Activated naive CD4-positive, alpha-beta T cell treated with anti-CD3 and anti-CD28 coated beads, Interleukin-2, amount 10 ng/mL, durations not matched to agents 7 days and 5 days (primary cell): ENCODE measurements at regions of chr1 and their contacts with region 1.

Region 1: DNA sequence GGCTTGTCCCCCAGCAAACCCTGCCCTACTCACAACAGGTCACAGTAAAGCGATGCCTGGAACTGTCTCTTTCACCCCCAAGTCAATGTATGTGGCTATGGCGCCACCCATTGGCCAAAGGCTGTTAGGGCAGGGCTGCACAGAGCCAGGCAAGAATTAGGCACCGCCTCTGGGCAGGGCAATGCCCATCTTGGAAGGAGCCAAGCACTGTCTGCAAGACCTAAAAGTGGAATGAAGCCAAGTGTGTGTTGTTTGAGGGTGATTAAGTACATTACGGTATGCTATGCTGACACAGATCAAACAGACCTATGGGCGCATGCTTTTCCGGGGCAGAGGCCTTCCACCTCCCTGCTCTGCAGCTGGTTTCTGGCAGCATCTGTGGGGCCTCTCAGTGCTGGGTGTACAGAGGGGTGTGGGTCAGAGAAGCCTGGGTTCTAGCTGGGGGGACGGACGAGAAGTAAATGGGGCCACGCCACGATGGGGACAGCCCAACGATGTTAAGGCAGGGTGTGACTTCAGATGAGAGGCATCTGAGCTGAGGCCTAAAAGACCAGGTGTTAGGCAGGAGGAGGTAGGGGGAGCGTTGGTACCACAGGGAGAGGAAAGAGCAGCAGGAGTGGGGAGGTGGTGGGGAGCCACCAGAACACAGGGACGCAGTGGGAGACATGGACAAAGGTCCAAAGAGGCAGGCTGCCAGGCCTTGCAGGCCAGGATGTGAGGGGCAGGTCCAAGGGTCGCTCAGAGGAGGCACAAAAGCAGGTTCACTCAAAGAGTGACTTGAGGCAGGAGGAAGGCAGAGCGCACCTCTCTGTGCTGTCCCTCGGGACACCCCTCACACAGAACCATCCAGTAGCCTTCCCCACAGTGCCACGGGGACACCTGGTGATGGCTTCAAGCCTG is 49.8 kb downstream of the ACOT7 start:
- DNase-seq: peak; percentile 81
- H3K4me3 Mint-ChIP-seq: no peak overlapping the region
- H3K27ac Mint-ChIP-seq: no peak overlapping the region
- H3K4me1 Mint-ChIP-seq: peaks cover 10% of the 10 kb centered on the region
- H3K27me3 Mint-ChIP-seq: no peaks in the 10 kb centered on the region

Region 2: GRCh38 chr1:6245086-6245868 is 98.5 kb before region 1 on chr1:
- CTCF ChIA-PET with region 1: interaction called, 37 read pairs
- DNase-seq: peak; percentile 87
- H3K4me3 Mint-ChIP-seq: no peak overlapping the region
- H3K27ac Mint-ChIP-seq: no peak overlapping the region
- H3K4me1 Mint-ChIP-seq: peaks cover 26% of the 10 kb centered on the region
- H3K27me3 Mint-ChIP-seq: peaks cover 92% of the 10 kb centered on the region

Region 3: DNA sequence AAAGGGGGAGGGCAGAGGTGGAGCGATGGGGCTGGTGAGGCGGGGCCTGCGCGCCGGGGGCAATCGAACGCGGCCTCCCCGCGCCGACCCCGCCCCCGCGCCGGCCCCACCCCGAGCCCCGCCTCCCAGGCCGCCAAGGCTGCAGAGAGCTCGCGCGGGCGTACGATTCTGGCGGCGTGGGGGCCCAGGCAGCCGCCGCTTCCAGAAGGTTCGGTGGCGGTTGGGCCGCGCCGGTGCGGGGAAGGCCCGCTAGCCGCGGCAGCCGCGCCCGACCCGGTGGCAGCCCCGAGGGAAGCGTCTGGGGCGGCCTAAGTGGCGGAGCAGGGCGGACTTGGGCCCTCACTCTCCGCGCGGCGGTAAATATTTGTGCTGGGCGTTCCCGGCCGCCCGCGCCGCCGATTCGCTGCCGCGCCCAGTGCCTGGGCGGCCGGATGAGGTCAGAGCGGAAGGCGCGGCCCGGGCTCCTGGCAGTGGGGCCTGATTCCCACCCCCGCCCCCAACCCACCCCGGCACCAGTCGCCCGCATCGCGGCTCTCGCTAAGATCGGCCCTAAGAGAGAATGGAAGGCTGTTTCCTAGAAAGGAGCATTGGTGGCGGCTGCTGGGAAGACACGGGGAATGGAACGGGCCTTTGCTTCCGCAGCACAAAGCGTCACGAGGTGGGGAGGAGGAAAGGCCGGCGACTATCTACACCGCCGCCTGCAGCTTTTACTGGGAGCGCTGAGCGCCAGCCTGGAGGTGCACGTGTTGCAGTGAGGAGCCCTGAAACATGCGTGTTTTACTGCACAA is 49.8 kb after region 1 on chr1 and contains the start of gene ACOT7:
- CTCF ChIA-PET with region 1: interaction called, 52 read pairs
- DNase-seq: peak; percentile 93
- H3K4me3 Mint-ChIP-seq: peak within 1 kb of the TSS; percentile 90
- H3K27ac Mint-ChIP-seq: peak within 1 kb of the TSS; percentile 92
- H3K4me1 Mint-ChIP-seq: peaks cover 44% of the 10 kb centered on the region
- H3K27me3 Mint-ChIP-seq: peaks cover 5% of the 10 kb centered on the region

Region 4: GRCh38 chr1:6408023-6408422 is 64.3 kb after region 1 on chr1:
- CTCF ChIA-PET with region 1: interaction called, 27 read pairs
- DNase-seq: no peak
- H3K4me3 Mint-ChIP-seq: no peak overlapping the region
- H3K27ac Mint-ChIP-seq: no peak overlapping the region
- H3K4me1 Mint-ChIP-seq: peaks cover 3% of the 10 kb centered on the region
- H3K27me3 Mint-ChIP-seq: peaks cover 65% of the 10 kb centered on the region

Region 5: DNA sequence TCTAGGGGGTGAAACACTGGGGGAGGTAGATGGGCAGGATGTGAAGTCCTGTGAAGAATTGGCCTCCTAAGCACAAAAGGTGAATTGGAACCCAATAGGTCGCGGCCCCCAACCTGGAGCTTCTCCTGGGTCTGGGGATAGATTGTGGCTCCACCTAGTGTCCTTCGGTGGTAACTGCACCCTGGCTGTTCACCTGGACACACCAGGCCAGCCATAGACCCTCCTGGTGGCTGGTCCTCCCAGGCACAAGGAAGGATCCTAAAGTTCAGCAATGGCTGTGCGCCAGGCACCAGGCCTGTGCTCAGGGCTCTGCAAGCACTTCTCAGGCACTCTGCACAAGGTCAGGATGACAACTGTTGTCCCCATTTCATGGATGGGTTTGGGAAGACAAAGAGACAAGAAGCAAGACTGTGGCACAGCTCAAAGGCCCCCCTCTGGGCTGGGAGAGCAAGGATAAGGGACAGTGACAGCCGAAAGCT is 94.3 kb after region 1 on chr1:
- CTCF ChIA-PET with region 1: interaction called, 16 read pairs
- DNase-seq: peak; percentile 84
- H3K4me3 Mint-ChIP-seq: no peak overlapping the region
- H3K27ac Mint-ChIP-seq: no peak overlapping the region
- H3K4me1 Mint-ChIP-seq: peaks cover 8% of the 10 kb centered on the region
- H3K27me3 Mint-ChIP-seq: peaks cover 88% of the 10 kb centered on the region

Region 6: DNA sequence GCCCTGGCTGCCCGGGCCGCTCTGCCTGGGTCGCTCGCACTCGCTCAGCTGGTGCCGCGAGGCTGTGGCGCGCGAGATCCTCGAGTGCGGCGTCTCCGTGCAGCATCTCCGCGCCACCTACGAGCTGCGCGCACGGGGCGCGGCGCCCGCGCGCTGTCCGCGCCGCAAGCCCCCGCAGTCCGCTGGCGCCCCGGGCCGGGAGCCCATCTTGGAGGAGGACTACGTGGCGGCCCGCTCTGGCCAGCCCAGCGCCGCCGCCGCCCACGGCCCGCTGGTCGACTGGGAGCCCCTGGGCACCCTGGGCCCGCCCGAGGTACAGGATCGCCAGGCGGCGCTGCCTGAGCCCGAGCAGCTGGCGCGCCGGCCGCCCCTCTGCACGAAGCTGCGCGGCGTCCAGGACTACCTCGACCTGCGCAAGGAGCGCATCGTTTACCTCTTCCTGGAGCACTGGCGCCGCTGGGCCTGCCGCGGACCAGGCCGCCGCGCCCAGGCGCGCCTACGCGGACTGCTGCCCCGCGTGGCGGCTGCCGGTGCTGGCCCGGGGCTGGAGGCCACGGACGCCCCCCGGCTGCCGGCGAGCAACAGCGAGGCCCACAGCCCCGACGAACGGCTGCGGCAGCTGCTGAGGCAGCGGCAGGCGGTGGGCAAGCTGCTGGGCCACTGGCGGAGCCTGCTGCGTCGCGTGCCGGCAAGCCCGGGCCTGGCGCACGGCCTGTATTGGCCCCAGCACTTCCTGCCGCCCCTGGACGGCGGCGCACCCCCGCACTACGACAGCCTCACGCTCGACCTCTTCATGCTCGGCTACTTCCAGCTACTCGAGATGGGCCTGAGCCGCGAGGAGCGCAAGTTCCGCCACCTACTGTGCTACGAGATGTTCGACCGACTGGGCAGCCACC is 111.3 kb after region 1 on chr1:
- CTCF ChIA-PET with region 1: no interaction called
- DNase-seq: peak; percentile 60
- H3K4me3 Mint-ChIP-seq: no peak overlapping the region
- H3K27ac Mint-ChIP-seq: no peak overlapping the region
- H3K4me1 Mint-ChIP-seq: peaks cover 31% of the 10 kb centered on the region
- H3K27me3 Mint-ChIP-seq: peaks cover 77% of the 10 kb centered on the region